ENCODE measurements at regions of chrX and their contacts with region 1.

Region 1: GRCh38 chrX:72539822-72540221 is 32.8 kb downstream of the HDAC8 start:
- DNase-seq: no peak

Region 2: DNA sequence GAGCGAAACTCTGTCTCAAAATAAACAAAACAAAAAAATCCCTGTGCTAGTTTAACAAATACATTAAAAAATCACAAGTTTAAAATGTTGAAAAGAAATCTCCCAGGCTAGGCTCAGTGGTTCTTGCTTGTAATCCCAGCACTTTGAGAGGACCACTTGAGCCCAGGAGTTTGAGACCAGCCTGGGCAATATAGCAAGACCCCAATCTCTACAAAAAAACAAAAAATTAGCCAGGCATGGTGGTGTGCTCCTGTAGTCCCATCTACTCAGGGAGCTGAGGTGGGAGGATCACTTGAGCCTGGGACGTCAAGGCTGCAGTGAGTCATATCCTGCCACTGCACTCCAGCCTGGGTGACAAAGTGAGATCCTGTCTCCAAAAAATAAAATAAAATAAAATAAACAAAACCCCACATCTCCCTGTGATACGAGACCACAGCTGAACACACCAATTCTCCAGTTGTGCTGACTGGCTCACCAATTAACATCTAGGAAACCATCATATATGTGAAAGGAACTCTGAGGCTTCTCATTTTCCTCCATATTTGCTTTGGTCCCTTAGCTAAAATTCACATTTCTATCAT is 270.1 kb before region 1 on chrX:
- intact Hi-C with region 1: loop called (anchors 10 kb)
- DNase-seq: peak in 3 of 42 donors; percentile 21 to 47 (median 35)

Measured in head of caudate nucleus (tissue), 42 donors.